ENCODE measurements at regions of chr5 and their contacts with region 1.

Region 1: DNA sequence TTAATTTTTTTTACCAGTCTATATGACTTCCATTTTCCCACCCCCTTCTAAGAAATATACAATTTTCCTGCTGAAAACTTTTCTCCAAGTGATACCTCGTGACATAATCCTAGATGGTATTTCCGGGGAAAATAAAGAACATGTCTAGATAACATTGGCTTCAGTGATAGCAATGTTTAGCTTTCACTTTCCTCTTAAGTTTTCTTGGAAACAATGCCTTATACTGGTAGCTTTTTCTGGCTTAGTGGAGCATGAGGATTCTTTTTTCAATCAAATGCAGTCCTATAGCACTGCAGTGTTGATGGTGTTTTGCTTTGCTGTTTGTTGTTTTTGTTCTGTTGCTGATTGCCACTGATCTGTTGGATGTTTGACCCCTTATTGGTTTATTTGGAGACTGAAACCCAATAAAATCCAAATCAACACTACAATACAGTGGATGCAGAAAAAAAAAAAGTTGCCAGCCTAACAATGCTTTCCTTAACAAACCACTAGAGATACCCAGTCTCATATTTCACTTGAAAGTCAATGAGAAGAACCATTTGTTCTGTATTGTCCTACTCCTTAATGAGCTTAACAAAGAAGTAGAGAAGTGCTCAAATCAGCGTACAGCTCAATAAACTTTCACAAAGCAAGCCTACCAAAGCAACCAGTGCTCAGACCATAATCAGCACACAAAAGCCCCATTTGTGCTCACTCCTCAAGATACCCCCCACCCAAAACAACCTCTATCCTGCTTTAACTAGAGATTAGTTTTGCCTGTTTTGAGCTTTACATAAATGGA is 74.2 kb upstream of the GRAMD2B start:
- DNase-seq: no peak
- ATAC-seq: no peak; the same call in 2 of the 3 replicates
- H3K4me3 ChIP-seq: no peak overlapping the region
- H3K27ac ChIP-seq: no peak overlapping the region
- H3K4me1 ChIP-seq: peaks cover 0 to 9% of the 10 kb centered on the region in 2 experiments; a peak in 2 of 5 replicates
- H3K27me3 ChIP-seq: no peaks in the 10 kb centered on the region; a peak in 1 of 5 replicates
- CTCF ChIP-seq: no peak
- EP300 ChIP-seq: no peak
- POLR2A ChIP-seq: no peak
- RAD21 ChIP-seq: no peak

Region 2: GRCh38 chr5:126422989-126423788 is 74.1 kb after region 1 on chr5 and contains the start of gene GRAMD2B:
- CTCF ChIA-PET with region 1: no interaction called
- POLR2A ChIA-PET with region 1: no interaction called
- in situ Hi-C with region 1: no loop called
- intact Hi-C with region 1: no loop called
- DNase-seq: peak; percentile 20 to 43 (median 30)
- ATAC-seq: peak; percentile 86
- H3K4me3 ChIP-seq: peak within 1 kb of the TSS; percentile 41
- H3K27ac ChIP-seq: peak within 1 kb of the TSS; percentile 50
- H3K4me1 ChIP-seq: peaks cover 0 to 6% of the 10 kb centered on the region in 2 experiments; a peak in 2 of 5 replicates
- H3K27me3 ChIP-seq: peaks cover 0 to 4% of the 10 kb centered on the region in 2 experiments; a peak in 2 of 5 replicates
- CTCF ChIP-seq: no peak
- EP300 ChIP-seq: no peak
- POLR2A ChIP-seq: peak; percentile 41; the same call in 1 of the 2 replicates
- RAD21 ChIP-seq: no peak
- polyA plus RNA-seq, gene GRAMD2B: 0.32 to 0.90 TPM

Region 3: DNA sequence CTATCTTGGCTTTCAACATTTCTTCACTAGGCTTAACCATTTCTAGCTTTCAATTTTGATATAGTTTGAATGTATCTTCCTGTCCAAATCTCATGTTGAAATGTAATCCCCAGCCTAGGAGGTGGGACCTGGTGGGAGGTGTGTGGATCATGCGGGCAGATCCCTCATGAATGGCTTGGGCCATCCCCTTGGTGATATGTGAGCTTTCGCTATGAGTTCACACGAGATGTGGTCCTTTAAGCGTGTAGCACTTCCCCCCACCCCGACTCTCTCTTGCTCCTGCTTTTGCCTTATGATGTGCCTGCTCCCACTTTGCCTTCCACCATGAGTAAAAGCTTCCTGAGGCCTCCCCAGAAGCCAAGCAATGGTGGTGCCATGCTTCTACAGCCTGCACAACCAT is 292.3 kb after region 1 on chr5:
- CTCF ChIA-PET with region 1: no interaction called
- POLR2A ChIA-PET with region 1: no interaction called
- in situ Hi-C with region 1: loop called (anchors 10 kb)
- intact Hi-C with region 1: no loop called
- DNase-seq: no peak
- ATAC-seq: peak; percentile 67
- H3K4me3 ChIP-seq: no peak overlapping the region
- H3K27ac ChIP-seq: no peak overlapping the region
- H3K4me1 ChIP-seq: no peaks in the 10 kb centered on the region; a peak in 1 of 5 replicates
- H3K27me3 ChIP-seq: no peaks in the 10 kb centered on the region; a peak in 1 of 5 replicates
- CTCF ChIP-seq: no peak
- EP300 ChIP-seq: no peak
- POLR2A ChIP-seq: no peak
- RAD21 ChIP-seq: no peak

Measured in K562 (cell line).